Activated CD8-positive, alpha-beta memory T cell treated with anti-CD3 and anti-CD28 coated beads, Interleukin-2, amount 10 ng/mL, durations not matched to agents 7 days and 5 days (primary cell): ENCODE measurements at regions of chr15 and their contacts with region 1.

Region 1: DNA sequence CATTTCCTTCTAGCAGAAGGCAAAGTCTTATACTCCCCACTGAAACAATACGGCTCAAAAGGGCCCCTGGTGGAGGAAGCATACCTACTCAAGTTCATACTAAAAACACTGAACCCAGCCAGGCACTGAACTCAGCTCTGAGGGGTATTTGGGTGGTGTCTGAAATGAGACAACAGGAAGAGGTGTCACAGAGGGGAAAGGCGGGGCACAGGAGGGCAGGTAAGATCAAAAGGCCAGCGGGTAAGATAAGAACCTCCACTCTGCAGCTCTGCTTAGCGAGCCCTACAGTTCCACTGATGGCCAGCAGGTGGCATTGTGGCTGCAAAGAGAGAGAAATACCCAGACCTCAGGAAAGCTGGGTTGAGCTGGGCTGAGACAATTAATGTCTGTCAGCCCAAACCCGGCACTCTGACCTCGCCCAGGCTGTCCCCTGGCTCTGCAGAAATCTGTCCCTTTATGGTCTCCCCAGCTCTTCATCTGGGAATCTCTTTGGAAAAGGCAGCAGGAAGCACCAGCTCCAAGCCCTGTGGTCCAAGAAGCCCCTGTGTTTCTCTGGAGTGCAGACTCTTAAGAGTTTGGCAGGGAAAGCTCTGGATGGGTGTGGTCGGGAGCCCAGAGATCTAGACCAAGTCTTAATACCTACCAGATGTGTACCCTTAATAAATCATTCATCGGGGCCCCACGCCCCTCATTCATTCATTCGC is 8.4 kb downstream of the MFGE8 start:
- DNase-seq: peak; percentile 94
- ATAC-seq: peak; percentile 98
- H3K4me3 Mint-ChIP-seq: no peak overlapping the region
- H3K27ac Mint-ChIP-seq: peak overlapping the region; percentile 76
- H3K4me1 Mint-ChIP-seq: peaks cover 16% of the 10 kb centered on the region
- H3K27me3 Mint-ChIP-seq: no peaks in the 10 kb centered on the region

Region 2: DNA sequence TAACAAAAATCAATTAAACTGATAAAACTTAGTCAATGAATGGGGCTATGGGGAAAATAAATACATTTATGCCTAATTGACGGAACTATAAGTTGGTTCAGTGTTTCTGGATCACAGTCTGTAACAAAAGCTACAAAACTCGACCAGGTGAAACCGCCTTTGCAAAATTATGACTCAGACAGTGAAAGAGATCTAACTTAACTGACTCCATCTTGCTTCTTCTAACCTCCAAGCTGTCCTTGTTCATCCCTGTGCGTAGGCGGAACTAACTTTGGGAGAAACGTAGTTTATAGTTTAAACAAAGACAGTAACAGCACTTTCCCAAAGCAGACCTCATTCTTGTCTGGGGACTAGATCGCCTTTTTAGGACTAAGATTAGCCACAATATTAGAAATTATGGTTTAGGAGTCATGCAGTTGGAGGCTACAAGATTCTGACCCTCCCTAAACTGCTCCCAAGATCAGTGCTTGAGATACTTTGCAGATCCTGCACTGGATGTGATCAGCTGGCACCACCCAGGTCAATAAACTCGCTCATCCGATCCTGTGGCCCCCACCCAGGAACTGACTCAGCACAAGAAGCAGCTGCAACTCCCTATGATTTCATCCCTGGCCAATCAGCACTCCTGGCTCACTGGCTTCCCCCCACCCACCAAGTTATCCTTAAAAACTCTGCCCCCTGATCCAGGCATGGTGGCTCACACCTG is 15.6 kb after region 1 on chr15:
- CTCF ChIA-PET with region 1: interaction called, 22 read pairs
- DNase-seq: no peak
- ATAC-seq: no peak
- H3K4me3 Mint-ChIP-seq: no peak overlapping the region
- H3K27ac Mint-ChIP-seq: peak overlapping the region; percentile 51
- H3K4me1 Mint-ChIP-seq: peaks cover 35% of the 10 kb centered on the region
- H3K27me3 Mint-ChIP-seq: peaks cover 16% of the 10 kb centered on the region

Region 3: DNA sequence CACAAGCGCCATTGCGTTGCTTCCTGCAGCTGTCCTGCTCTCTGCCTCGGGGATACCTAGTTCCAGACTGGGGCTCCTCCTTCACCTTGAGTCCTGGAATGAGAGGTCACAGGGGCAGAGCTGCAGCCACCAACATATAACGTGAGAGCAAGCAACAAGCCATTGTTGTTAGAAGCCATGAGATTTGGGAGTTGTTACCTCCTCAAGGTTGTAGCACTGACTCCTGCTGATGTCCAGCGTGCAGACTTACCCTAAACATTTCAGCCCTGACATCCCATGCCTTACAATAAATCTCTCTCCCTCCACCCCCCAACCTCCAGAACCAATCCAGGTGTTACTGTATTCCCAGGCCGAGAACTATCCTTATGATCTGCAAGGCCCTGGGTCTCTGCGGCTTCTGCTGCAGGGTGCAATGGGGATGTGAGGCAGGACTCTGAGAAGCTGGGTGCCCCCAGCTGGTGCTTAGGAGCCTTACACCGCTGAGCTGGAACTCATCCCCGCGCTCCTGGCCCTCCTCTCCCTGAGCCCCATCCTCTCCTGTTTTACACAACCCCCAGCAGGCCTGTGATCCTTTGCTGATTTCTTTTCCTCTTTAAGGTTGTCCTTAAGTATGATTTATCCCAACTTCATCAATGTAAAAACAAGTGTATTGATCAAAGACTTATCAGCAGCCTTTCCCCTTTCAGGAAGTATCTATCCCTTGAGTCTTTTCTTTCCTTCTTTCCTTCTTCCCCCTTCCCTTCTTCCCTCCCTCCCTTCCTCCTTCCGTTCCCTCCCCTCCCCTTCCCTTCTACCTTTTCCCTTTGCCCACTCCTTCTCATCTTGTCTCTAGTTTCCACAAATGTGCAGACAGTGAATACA is 99.3 kb after region 1 on chr15:
- CTCF ChIA-PET with region 1: interaction called, 14 read pairs
- DNase-seq: no peak
- ATAC-seq: no peak
- H3K4me3 Mint-ChIP-seq: no peak overlapping the region
- H3K27ac Mint-ChIP-seq: no peak overlapping the region
- H3K4me1 Mint-ChIP-seq: peaks cover 8% of the 10 kb centered on the region
- H3K27me3 Mint-ChIP-seq: peaks cover 10% of the 10 kb centered on the region

Region 4: DNA sequence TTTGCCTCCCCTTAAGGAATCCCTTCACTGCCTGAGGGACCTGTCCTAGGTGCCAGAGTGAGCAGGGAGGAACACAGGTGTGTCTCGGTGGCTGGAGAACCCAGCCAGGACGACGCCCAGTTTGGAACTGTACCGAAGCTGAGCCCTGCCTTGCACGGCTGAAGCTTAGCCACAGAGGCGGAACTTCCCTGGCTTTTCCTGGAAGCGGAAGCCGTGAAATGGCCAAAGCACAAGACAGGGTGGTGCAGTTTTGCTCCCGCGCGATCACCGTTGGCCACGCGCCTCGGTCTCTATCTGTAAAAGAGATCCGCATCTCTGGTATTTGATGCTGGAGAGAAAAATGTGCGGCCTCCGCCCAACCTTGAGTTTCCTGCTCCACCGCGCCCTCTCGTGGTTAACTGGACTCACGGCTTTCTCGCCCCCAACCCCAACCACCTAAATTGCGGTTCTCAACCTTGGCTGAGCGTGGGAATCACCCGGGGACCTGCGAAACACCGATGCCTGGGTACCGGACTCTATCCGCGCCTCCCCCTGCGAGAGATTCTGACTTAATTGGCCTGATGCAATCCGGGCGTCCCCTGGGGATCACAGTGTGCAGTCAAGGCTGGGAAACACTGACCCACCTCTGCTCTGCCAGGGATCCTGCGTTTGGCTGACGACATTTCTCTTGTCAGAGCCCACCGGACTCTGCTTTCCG is 112.7 kb after region 1 on chr15:
- CTCF ChIA-PET with region 1: interaction called, 23 read pairs
- DNase-seq: peak; percentile 87
- ATAC-seq: peak; percentile 87
- H3K4me3 Mint-ChIP-seq: peak overlapping the region; percentile 57
- H3K27ac Mint-ChIP-seq: peak overlapping the region; percentile 47
- H3K4me1 Mint-ChIP-seq: peaks cover 20% of the 10 kb centered on the region
- H3K27me3 Mint-ChIP-seq: peaks cover 45% of the 10 kb centered on the region

Region 5: DNA sequence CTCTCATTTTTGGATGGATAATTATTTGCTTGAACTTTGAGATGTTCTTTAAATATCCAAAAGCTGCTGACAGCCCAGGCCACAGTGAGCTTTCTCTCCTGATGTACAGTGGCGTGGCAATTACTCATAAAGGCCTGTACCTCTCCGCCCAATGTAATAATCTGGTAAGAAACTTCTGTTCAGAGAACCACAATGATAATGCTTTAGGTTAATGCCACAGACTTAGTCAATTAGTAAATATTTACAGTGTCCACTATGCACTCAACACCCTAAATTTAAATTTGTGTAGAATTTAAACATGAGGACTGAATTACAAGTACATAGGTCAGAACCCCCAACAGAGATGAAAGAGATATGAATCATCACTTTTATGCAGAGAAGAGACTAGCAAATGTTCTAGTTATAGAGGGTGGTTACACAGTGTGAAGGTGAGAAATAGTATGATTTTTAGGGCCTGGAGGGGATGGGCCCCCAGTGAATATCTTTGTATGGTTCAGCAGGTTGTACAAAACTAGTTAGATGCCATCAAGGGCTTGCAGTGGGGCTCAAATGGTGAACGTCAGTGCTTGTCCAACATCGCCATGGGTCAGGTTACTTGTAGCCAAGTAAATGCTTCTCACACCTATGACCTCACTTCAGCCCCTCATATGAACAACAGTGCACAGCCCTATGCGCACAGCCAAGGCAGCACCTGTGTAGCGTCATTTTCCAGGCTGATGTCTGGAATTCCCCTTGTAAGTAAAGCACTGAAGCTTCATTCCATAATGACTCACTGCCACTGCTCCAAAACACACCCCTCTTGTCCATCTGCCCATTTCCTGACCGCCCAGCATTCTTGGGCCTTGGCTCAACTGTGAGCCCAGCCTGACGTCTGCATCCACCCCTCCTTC is 196.8 kb after region 1 on chr15:
- CTCF ChIA-PET with region 1: no interaction called
- DNase-seq: no peak
- ATAC-seq: no peak
- H3K4me3 Mint-ChIP-seq: no peak overlapping the region
- H3K27ac Mint-ChIP-seq: no peak overlapping the region
- H3K4me1 Mint-ChIP-seq: peaks cover 6% of the 10 kb centered on the region
- H3K27me3 Mint-ChIP-seq: no peaks in the 10 kb centered on the region